ENCODE measurements at regions of chr4 and their contacts with region 1.

Region 1: DNA sequence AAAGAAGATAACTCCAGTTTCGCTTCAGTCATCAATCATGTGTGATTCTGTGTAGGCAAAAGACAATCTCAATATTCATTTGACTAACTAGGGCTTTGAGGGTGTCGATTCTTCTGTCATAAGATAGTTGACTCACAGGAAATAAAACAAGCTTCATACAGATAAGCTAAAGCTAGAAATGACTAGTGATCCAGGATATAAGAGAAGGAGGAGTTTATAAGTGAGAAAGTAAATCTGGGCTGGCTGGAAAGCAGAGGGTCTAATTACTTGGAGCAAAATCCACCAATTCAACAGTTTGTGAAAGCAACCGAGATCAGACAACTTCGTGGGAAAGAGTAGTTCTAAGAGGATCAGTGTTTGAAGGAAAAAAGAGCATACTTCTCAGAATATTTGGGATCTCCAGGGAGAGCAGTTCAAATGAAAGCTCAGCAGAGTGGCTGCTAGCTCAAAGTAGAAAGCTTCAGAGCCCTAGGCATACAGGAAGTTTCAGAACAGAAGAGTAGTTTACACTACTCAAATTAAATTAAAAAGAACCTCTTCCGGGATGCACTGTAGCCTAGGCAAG is 429.3 kb downstream of the INPP4B start:
- DNase-seq: no peak
- H3K4me3 Mint-ChIP-seq: peak overlapping the region; percentile 63
- H3K27ac Mint-ChIP-seq: peak overlapping the region; percentile 98
- H3K4me1 Mint-ChIP-seq: peaks cover 39% of the 10 kb centered on the region
- H3K27me3 Mint-ChIP-seq: no peaks in the 10 kb centered on the region

Region 2: GRCh38 chr4:142379277-142380057 is 37.3 kb before region 1 on chr4:
- CTCF ChIA-PET with region 1: no interaction called
- POLR2A ChIA-PET with region 1: interaction called, 10 read pairs
- DNase-seq: no peak
- H3K4me3 Mint-ChIP-seq: no peak overlapping the region
- H3K27ac Mint-ChIP-seq: peak overlapping the region; percentile 9
- H3K4me1 Mint-ChIP-seq: peaks cover 66% of the 10 kb centered on the region
- H3K27me3 Mint-ChIP-seq: no peaks in the 10 kb centered on the region

Region 3: GRCh38 chr4:142558851-142559250 is 142.1 kb after region 1 on chr4:
- CTCF ChIA-PET with region 1: no interaction called
- POLR2A ChIA-PET with region 1: interaction called, 10 read pairs
- DNase-seq: no peak
- H3K4me3 Mint-ChIP-seq: peak overlapping the region; percentile 25
- H3K27ac Mint-ChIP-seq: peak overlapping the region; percentile 66
- H3K4me1 Mint-ChIP-seq: peaks cover 66% of the 10 kb centered on the region
- H3K27me3 Mint-ChIP-seq: no peaks in the 10 kb centered on the region

Region 4: DNA sequence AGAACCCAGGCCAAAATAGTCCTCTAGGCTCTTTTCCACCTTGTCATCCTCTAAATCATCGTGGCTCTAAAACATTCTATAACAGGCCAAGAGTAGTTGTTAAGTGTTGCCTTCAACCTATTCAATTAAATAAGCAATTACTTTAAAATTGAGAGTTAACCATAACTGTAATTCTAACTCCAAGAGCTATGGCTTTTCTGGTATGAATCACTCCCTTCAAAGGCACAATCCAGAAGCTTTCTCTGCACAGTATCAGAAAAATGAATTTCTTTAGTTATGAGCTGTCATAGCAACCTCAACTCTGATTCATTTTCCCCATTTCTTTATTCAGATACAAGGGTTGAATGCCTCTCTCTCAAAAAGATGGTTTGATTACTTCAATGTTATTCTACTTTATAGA is 407.6 kb after region 1 on chr4:
- CTCF ChIA-PET with region 1: no interaction called
- POLR2A ChIA-PET with region 1: no interaction called
- DNase-seq: no peak
- H3K4me3 Mint-ChIP-seq: no peak overlapping the region
- H3K27ac Mint-ChIP-seq: no peak overlapping the region
- H3K4me1 Mint-ChIP-seq: peaks cover 2% of the 10 kb centered on the region
- H3K27me3 Mint-ChIP-seq: peaks cover 5% of the 10 kb centered on the region

Measured in activated CD4-positive, alpha-beta memory T cell treated with anti-CD3 and anti-CD28 coated beads, Interleukin-2, amount 10 ng/mL, durations not matched to agents 7 days and 5 days (primary cell).